ENCODE measurements at regions of chr6 and their contacts with region 1.

Region 1: GRCh38 chr6:33391278-33391921 is at the start of gene KIFC1:
- DNase-seq: peak; percentile 100
- ATAC-seq: peak; percentile 85
- H3K4me3 ChIP-seq: peak within 1 kb of the TSS; percentile 54 to 73 (median 59)
- H3K4me3 Mint-ChIP-seq: peak within 1 kb of the TSS; percentile 80
- H3K27ac ChIP-seq: peak within 1 kb of the TSS; percentile 88
- H3K27ac Mint-ChIP-seq: peak within 1 kb of the TSS; percentile 95
- H3K4me1 ChIP-seq: peaks cover 12 to 18% of the 10 kb centered on the region in 2 donors
- H3K4me1 Mint-ChIP-seq: peaks cover 23% of the 10 kb centered on the region
- H3K27me3 ChIP-seq: no peaks in the 10 kb centered on the region
- H3K27me3 Mint-ChIP-seq: no peaks in the 10 kb centered on the region
- CTCF ChIP-seq: peak; percentile 88
- total RNA-seq, gene KIFC1: 0.70 and 0.79 TPM in 2 replicates

Region 2: DNA sequence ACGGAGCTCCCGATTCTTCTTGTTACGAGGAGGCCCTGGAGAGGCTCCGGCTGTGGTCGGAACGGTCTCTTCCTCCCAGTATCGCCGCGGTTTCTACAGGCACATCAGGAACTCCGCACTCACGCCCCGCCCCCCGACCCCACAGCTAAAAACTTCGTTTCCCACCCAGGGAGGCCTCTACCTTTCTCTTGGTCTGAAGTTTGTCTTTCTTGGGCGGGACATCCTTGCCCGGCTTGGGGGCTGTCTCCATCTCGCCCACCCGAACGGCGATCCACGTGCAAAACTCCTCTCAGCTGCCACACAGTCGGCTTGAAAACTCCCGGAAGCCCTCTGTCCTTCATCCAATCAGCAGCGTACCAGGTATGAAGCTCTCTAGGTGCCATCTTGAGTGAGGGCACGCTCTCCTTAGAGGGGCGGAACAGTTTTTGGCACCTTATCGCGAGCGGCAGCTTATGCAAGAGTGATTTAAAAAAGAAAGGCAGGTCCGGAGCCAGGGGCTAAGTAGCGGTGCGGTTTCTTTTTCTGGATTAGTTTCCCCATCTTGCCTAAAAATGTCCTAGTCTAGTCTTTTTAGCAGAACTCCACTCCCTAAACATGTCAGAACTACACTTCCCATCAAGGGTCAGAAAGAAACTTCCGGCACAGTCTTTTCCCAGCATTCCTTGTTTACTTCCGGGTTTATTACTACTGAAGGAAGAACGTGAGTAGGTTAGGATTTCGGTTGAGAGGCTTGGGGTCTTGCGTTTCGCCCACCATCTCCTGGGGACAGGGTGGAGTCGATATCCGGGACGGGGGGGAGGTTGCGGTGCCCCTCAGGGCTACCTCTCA is 102.3 kb before region 1 on chr6 and contains the starts of genes PFDN6 and WDR46:
- CTCF ChIA-PET with region 1: interaction called, 5 read pairs
- POLR2A ChIA-PET with region 1: no interaction called
- intact Hi-C with region 1: loop called (anchors 1 kb)
- DNase-seq: peak; percentile 93
- ATAC-seq: peak; percentile 96
- H3K4me3 ChIP-seq: peak within 1 kb of the TSS; percentile 78 to 99 (median 86)
- H3K4me3 Mint-ChIP-seq: peak within 1 kb of the TSS; percentile 93
- H3K27ac ChIP-seq: peak within 1 kb of the TSS; percentile 42 to 68
- H3K27ac Mint-ChIP-seq: peak within 1 kb of the TSS; percentile 86
- H3K4me1 ChIP-seq: peaks cover 19 to 25% of the 10 kb centered on the region in 2 donors
- H3K4me1 Mint-ChIP-seq: peaks cover 38% of the 10 kb centered on the region
- H3K27me3 ChIP-seq: no peaks in the 10 kb centered on the region
- H3K27me3 Mint-ChIP-seq: no peaks in the 10 kb centered on the region
- CTCF ChIP-seq: no peak
- total RNA-seq, gene PFDN6: 44.7 and 51.1 TPM in 2 replicates
- total RNA-seq, gene WDR46: 66.4 and 77.2 TPM in 2 replicates

Region 3: GRCh38 chr6:33344701-33345697 is 46.4 kb before region 1 on chr6:
- CTCF ChIA-PET with region 1: interaction called, 17 read pairs
- POLR2A ChIA-PET with region 1: interaction called, 4 read pairs
- intact Hi-C with region 1: loop called (anchors 2 kb)
- DNase-seq: peak; percentile 91
- ATAC-seq: peak; percentile 31
- H3K4me3 ChIP-seq: peak overlapping the region in 4 of 5 experiments; percentile 13 to 59 (median 42)
- H3K4me3 Mint-ChIP-seq: peak overlapping the region; percentile 81
- H3K27ac ChIP-seq: peak overlapping the region; percentile 92 to 93
- H3K27ac Mint-ChIP-seq: peak overlapping the region; percentile 94
- H3K4me1 ChIP-seq: peaks cover 40 to 50% of the 10 kb centered on the region in 2 donors
- H3K4me1 Mint-ChIP-seq: peaks cover 36% of the 10 kb centered on the region
- H3K27me3 ChIP-seq: no peaks in the 10 kb centered on the region
- H3K27me3 Mint-ChIP-seq: no peaks in the 10 kb centered on the region
- CTCF ChIP-seq: peak; percentile 79

Region 4: DNA sequence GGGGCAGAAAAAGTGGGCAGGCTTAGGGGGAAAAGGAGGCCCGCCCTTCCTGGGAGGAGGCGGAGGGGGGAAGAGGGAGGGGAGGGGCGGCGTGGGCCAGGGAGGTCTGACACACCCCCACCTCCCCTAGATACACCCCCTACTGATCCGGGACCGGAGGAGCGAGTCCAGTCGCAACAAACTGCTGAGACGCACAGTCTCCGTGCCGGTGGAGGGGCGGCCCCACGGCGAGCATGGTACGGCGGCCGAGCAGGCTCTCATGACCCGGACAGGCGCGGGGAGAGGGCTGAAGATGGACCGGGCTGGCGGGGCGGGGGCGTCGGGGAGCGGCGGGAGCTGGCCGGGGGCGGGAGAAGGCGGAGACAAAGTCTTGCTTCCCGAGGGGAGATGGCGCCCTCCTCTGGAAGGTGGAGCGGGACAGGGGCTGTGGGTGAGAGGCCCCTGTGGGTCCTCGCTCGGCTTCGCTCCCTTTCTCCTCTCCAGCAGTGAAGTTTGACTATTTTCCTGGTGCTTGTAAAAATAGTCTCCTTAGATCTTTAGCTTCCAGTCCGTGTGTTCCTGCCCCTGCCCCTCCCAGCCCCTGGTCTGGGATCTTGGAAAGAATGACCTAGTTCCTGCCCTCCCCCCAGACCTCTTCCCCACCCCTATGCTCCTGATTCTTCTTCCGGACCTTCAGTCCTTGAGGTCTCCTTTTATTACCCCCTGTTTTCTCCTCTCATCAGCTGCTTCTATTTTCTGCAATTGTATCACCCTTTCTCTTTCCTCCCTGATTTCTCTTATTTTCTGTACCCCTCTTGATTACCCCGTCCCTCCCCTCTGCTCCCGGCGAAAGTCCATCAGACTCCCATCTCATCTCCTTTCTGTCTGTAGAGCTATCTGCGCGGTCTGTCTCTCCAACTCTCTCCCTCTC is 34.5 kb after region 1 on chr6:
- CTCF ChIA-PET with region 1: interaction called, 12 read pairs
- POLR2A ChIA-PET with region 1: interaction called, 7 read pairs
- intact Hi-C with region 1: loop called (anchors 1 kb)
- DNase-seq: peak; percentile 83
- ATAC-seq: peak; percentile 59
- H3K4me3 ChIP-seq: peak overlapping the region; percentile 48 to 79 (median 62)
- H3K4me3 Mint-ChIP-seq: peak overlapping the region; percentile 92
- H3K27ac ChIP-seq: peak overlapping the region; percentile 78 to 86
- H3K27ac Mint-ChIP-seq: peak overlapping the region; percentile 91
- H3K4me1 ChIP-seq: peaks cover 50 to 56% of the 10 kb centered on the region in 2 donors
- H3K4me1 Mint-ChIP-seq: peaks cover 65% of the 10 kb centered on the region
- H3K27me3 ChIP-seq: no peaks in the 10 kb centered on the region
- H3K27me3 Mint-ChIP-seq: peaks cover 4% of the 10 kb centered on the region
- CTCF ChIP-seq: peak; percentile 25

Region 5: DNA sequence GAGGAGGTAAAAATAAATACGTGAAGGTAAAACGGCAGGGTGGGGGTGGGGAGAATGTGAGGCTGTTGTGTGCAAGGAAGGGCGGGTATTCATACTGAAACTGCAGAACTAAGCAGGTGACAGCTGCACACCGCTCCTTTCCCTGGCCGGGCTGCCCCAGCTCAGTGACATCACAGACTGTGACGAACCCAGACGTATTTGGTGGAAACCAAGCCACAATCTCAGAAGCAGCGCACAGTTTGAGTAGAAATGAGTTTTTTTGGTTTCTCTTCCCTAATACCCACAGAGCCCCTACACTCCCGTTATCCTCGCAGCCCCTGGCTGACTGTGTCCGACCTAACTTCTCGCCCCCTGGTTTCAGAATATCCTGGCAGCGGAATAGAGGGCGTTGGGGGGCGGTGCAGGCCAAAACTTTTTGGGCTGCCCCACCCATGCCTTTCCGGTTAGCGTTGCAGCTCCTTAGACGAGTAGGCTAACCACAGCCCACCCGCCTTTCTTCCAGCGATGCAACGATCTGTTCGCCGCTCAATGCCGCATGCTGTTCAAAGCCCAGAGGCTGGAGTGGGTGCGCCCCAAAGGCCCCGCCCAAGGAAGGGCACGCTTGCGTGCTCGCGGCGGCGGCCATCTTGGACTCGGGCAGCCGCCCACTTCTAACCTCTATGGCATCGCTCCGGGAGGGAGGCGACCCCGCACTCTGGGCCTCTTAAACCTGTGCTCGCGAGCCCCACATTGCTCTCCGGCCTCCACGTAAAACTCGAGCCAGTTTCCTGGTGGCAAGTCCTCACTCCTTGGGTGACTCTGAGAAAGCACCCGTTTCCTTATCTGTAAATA is 179.6 kb after region 1 on chr6:
- CTCF ChIA-PET with region 1: interaction called, 3 read pairs
- POLR2A ChIA-PET with region 1: no interaction called
- intact Hi-C with region 1: loop called (anchors 1 kb)
- DNase-seq: peak; percentile 97
- ATAC-seq: peak; percentile 84
- H3K4me3 ChIP-seq: peak overlapping the region; percentile 61 to 99 (median 76)
- H3K4me3 Mint-ChIP-seq: peak overlapping the region; percentile 94
- H3K27ac ChIP-seq: peak overlapping the region; percentile 95 to 100
- H3K27ac Mint-ChIP-seq: peak overlapping the region; percentile 100
- H3K4me1 ChIP-seq: peaks cover 16 to 24% of the 10 kb centered on the region in 2 donors
- H3K4me1 Mint-ChIP-seq: peaks cover 31% of the 10 kb centered on the region
- H3K27me3 ChIP-seq: no peaks in the 10 kb centered on the region
- H3K27me3 Mint-ChIP-seq: no peaks in the 10 kb centered on the region
- CTCF ChIP-seq: no peak

Region 6: GRCh38 chr6:33665957-33666356 is 274.6 kb after region 1 on chr6:
- CTCF ChIA-PET with region 1: no interaction called
- POLR2A ChIA-PET with region 1: no interaction called
- intact Hi-C with region 1: no loop called
- DNase-seq: no peak
- ATAC-seq: no peak
- H3K4me3 ChIP-seq: no peak overlapping the region
- H3K4me3 Mint-ChIP-seq: no peak overlapping the region
- H3K27ac ChIP-seq: no peak overlapping the region
- H3K27ac Mint-ChIP-seq: no peak overlapping the region
- H3K4me1 ChIP-seq: peaks cover 0 to 16% of the 10 kb centered on the region in 2 donors
- H3K4me1 Mint-ChIP-seq: peaks cover 13% of the 10 kb centered on the region
- H3K27me3 ChIP-seq: no peaks in the 10 kb centered on the region
- H3K27me3 Mint-ChIP-seq: no peaks in the 10 kb centered on the region
- CTCF ChIP-seq: no peak

Measured in B cell (primary cell).